Calu3 (cell line): ENCODE measurements at regions of chr1 and their contacts with region 1.

Region 1: DNA sequence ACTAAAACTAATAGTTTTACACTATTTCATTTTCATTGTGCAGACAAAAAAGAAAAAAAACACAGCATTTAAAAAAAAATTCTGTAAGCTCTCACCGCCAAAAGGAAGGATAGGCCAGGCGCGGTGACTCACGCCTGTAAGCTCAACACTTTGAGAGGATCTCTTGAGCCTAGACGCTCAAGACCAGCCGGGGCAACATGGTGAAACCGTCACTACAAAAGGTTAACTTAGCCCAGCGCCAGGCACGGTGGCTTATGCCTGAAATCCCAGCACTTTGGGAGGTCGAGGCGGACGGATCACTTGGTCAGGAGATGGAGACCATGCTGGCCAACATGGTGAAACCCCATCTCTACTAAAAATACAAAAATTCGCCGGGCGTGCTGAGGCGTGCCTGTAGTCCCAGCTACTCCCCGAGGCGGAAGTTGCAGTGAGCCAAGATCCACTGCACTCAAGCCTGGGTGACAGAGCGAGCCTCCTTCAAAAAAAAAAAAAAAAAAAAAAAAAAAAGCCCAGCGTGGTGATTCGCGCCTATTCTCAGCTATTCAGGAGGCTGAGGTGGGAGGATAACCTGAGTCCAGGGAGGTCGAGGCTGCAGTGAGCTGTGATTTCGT is 14.3 kb upstream of the SPEN start:
- DNase-seq: peak; percentile 49
- H3K4me3 Mint-ChIP-seq: peak overlapping the region; percentile 81
- H3K27ac Mint-ChIP-seq: peak overlapping the region; percentile 36
- H3K4me1 Mint-ChIP-seq: peaks cover 12% of the 10 kb centered on the region
- H3K27me3 Mint-ChIP-seq: no peaks in the 10 kb centered on the region
- CTCF ChIP-seq: no peak

Region 2: GRCh38 chr1:15816674-15817073 is 16.5 kb before region 1 on chr1:
- CTCF ChIA-PET with region 1: interaction called, 8 read pairs
- intact Hi-C with region 1: loop called (anchors 2 kb)
- DNase-seq: no peak
- H3K4me3 Mint-ChIP-seq: no peak overlapping the region
- H3K27ac Mint-ChIP-seq: no peak overlapping the region
- H3K4me1 Mint-ChIP-seq: no peaks in the 10 kb centered on the region
- H3K27me3 Mint-ChIP-seq: no peaks in the 10 kb centered on the region
- CTCF ChIP-seq: no peak